OCI-LY7 (cell line): ENCODE measurements at regions of chr16 and their contacts with region 1.

Region 1: GRCh38 chr16:68219725-68220351 is 16.1 kb downstream of the ESRP2 start:
- DNase-seq: no peak
- H3K4me3 ChIP-seq: no peak overlapping the region
- H3K27ac ChIP-seq: no peak overlapping the region
- H3K4me1 ChIP-seq: peaks cover 8% of the 10 kb centered on the region
- CTCF ChIP-seq: no peak

Region 2: GRCh38 chr16:68088130-68088972 is 131.5 kb before region 1 on chr16:
- CTCF ChIA-PET with region 1: no interaction called
- POLR2A ChIA-PET with region 1: no interaction called
- intact Hi-C with region 1: no loop called
- DNase-seq: no peak
- H3K4me3 ChIP-seq: peak overlapping the region; percentile 91
- H3K27ac ChIP-seq: peak overlapping the region; percentile 90
- H3K4me1 ChIP-seq: peaks cover 63% of the 10 kb centered on the region
- CTCF ChIP-seq: no peak

Region 3: GRCh38 chr16:68190081-68190480 is 29.8 kb before region 1 on chr16:
- CTCF ChIA-PET with region 1: no interaction called
- POLR2A ChIA-PET with region 1: no interaction called
- intact Hi-C with region 1: loop called (anchors 1 kb)
- DNase-seq: no peak
- H3K4me3 ChIP-seq: no peak overlapping the region
- H3K27ac ChIP-seq: no peak overlapping the region
- H3K4me1 ChIP-seq: no peaks in the 10 kb centered on the region
- CTCF ChIP-seq: no peak

Region 4: DNA sequence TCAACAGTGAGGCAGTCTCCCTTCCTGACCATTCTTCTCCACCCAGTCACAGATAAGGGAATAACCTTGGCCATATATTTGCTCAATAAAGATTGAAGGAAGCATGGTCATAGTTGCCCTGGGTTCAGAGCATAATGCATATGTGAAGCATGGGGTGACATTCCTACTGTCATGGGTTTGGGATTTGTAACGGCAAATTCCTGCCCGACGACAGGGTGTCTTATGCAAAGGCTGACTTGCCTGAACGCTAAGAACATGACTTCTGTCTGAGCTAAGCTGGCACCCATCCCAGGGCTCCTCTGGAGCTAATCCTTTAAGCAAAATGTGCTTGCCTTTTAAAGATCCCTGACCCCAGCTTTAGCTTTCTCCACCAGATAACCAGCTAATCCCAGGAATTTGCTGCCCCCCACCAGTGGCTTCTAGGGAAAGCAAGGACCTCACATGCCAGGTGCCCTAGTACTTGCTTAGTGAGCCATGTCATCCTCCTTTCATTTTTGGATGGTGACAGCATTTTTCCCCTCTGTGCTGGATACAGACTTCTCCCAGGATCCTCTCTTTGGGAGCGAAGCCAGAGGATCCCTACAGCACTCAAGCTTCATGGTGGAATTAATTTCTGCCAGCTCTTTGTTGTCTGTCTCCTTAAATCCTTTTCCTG is 79.2 kb after region 1 on chr16:
- CTCF ChIA-PET with region 1: no interaction called
- POLR2A ChIA-PET with region 1: no interaction called
- intact Hi-C with region 1: no loop called
- DNase-seq: no peak
- H3K4me3 ChIP-seq: no peak overlapping the region
- H3K27ac ChIP-seq: no peak overlapping the region
- H3K4me1 ChIP-seq: no peaks in the 10 kb centered on the region
- CTCF ChIP-seq: no peak